Activated naive CD4-positive, alpha-beta T cell treated with anti-CD3 and anti-CD28 coated beads for 36 hours (primary cell): ENCODE measurements at regions of chr14 and their contacts with region 1.

Region 1: DNA sequence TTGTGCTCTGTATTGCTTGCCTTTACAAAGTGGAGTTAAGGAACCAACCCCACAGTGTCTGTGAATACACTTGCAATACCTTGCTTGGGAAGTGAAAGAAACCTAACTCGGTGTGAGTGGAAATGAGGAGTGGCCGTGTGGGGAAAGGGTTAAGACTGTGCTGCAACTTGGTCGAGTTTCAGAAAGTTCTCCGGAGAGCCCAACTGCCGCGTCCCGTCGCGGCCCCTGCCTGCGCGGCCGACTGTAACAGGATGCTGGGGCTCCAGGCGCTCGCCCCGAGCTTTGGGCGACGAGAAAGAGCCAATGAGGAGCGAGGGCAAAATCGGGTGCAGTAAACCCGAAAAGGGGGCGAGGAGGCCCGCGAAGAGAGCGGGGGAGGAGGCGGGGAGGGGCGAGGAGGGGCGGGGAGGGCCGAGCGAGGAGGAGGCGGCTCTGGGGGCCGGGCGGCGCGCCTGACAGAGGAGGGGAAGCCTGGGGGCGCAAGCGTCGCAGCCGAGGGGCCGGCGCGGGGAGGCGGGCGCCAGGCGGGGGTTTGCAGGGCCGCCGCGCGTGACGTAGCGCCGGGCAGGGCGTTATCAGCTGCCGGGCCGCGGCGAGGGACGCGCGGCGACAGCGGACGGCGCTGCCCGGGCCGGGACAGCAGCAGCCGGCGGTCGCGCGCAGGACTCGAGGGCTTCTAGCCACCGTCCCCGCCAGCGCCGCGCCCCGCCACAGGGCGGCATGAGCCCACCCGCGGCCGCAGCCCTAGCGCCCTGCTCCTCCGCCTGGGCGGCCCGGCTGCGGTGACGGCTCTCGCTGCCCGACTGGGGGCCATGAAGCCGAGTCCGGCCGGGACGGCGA is at the start of gene DACT1:
- DNase-seq: peak; percentile 68
- H3K4me3 Mint-ChIP-seq: peak within 1 kb of the TSS; percentile 91
- H3K27ac Mint-ChIP-seq: peak within 1 kb of the TSS; percentile 90
- H3K4me1 Mint-ChIP-seq: peaks cover 48% of the 10 kb centered on the region
- H3K27me3 Mint-ChIP-seq: peaks cover 5% of the 10 kb centered on the region
- total RNA-seq, gene DACT1: 4.0 to 5.2 TPM

Region 2: DNA sequence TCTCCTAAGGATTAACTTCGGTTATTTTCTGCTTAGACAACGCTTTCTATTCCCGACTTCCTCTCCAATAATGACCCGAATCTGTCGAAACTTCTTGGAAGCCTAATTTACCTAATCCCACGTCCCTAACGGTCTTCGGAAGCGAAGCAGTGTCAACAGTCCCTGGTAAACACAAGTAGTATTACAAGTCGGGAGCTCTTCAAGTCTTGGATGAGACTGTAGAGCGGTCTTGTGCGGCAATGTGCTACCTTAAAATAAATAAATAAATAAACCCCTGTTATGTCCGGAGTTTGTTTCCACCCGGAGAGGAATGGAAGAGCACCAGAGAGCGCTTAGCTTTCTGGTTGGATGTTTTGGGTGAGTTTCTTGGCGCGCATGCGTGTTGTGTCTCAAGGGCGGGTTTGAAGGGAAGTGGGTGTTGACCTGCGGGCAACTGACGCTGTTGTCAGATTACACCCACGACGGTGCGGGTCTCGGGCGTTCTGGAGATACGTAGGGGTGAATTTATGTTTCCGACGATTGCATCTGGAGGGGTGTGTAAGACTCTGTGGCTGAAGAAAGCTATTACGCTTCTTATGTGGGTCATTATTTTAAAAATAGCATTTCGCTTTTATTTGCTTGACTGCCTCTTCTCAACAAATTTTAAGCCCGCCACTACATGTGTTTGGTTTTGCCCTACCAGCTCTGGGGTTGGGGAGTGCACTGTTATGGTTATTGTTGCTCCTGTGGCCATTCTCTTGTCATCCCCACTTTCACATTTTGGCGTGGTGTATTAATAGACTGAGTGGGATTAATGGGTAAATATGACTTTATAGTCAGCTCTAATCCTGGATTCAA is 210.1 kb before region 1 on chr14 and contains the starts of genes KIAA0586 and TIMM9:
- CTCF ChIA-PET with region 1: interaction called, 3 read pairs
- intact Hi-C with region 1: loop called (anchors 1 kb)
- DNase-seq: peak; percentile 98
- H3K4me3 Mint-ChIP-seq: peak within 1 kb of the TSS; percentile 88
- H3K27ac Mint-ChIP-seq: peak within 1 kb of the TSS; percentile 99
- H3K4me1 Mint-ChIP-seq: peaks cover 48% of the 10 kb centered on the region
- H3K27me3 Mint-ChIP-seq: no peaks in the 10 kb centered on the region
- total RNA-seq, gene KIAA0586: 40.4 to 41.8 TPM
- total RNA-seq, gene TIMM9: 60.7 to 64.4 TPM

Region 3: GRCh38 chr14:58598028-58598803 is 39.4 kb before region 1 on chr14:
- CTCF ChIA-PET with region 1: interaction called, 3 read pairs
- intact Hi-C with region 1: loop called (anchors 1 kb)
- DNase-seq: peak; percentile 39
- H3K4me3 Mint-ChIP-seq: no peak overlapping the region
- H3K27ac Mint-ChIP-seq: no peak overlapping the region
- H3K4me1 Mint-ChIP-seq: peaks cover 43% of the 10 kb centered on the region
- H3K27me3 Mint-ChIP-seq: peaks cover 3% of the 10 kb centered on the region

Region 4: DNA sequence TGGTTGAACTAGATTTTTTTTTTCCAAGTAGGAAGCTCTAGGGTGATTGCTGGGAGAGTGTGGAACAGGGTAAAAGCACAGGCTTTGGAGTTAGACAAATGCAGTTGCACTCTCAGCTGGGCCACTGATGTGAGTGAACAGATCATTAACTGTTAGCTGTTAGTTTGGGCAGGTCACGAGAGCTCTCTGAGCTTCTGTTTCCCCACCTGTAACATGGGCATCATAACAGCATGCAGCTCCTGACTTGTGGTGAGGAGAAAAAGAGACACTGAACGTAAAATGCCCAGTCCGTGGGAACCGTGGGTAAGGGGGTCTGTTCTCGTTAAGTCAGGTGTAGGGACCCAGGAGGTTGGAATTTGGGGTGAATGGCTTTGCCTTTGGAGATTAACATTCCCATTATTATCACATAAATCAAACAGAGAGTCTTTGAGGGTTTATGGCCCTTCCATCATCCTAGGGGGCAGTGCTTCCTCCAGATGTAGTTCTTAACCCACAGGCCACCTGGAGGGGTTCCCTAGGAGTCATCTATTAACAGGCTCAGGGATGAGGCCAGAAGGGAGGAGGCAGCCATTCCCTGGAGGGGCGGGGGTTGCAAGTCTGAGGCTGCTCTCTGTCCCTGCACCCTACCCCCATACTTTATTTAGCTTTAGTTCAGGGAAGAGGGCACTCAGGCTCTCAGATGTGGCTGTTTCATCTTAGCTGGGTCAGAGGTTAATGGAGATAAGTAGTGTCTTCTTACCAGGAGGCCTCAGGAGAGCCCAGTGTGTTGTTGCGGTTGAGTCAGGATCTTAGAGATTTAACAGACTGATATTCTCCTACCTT is 135.4 kb after region 1 on chr14:
- CTCF ChIA-PET with region 1: no interaction called
- intact Hi-C with region 1: no loop called
- DNase-seq: no peak
- H3K4me3 Mint-ChIP-seq: no peak overlapping the region
- H3K27ac Mint-ChIP-seq: no peak overlapping the region
- H3K4me1 Mint-ChIP-seq: no peaks in the 10 kb centered on the region
- H3K27me3 Mint-ChIP-seq: no peaks in the 10 kb centered on the region

Region 5: GRCh38 chr14:58954901-58955861 is 317.6 kb after region 1 on chr14:
- CTCF ChIA-PET with region 1: no interaction called
- intact Hi-C with region 1: loop called (anchors 1 kb)
- DNase-seq: no peak
- H3K4me3 Mint-ChIP-seq: no peak overlapping the region
- H3K27ac Mint-ChIP-seq: no peak overlapping the region
- H3K4me1 Mint-ChIP-seq: peaks cover 8% of the 10 kb centered on the region
- H3K27me3 Mint-ChIP-seq: peaks cover 11% of the 10 kb centered on the region

Region 6: DNA sequence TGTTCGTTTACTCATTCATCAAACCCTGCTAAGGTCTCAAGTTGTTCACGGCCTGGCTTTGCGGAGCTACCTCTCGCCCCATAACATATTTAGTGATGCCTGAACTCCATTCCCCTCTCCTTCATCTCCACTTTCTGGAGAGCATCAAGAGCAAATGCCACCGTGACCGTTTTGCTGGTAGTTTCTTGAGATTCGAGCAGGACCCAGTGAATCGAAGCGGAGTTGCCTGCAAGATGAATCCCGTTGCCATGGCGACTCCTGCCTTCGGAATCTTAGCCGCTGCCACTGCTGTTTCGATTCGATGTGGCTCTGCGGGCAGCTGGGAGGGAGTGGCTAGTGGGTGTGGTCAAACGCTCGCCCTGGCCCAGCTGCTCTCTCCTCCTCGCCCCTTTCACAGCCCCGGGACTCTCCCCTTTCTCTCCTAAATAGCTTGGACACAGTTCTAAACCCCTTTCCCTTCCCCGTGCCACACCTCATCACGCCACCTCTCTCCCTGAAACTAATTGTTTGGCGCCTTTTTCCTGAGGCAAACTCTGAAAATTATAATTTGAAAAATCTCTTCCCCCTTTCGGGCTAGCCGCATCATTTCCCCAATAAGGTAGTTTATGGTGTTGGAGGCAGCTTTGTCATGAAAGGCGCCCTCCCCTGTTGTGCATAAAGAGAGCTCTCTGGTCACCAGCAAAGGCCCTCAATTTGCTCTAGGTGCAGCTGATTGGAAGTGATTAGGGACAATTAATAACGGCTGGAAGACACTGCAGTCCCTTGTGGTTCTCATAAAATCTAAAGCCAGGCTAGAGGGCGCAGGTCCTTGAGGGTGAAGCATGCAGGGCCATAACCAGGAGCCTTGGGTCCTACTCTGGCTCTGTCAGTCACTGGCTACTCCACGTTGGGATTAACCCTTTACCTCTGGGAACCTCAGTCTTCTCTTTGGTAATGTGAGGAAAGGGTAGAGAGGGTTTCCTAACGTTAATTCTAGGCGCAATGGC is 552.5 kb after region 1 on chr14:
- CTCF ChIA-PET with region 1: no interaction called
- intact Hi-C with region 1: loop called (anchors 1 kb)
- DNase-seq: peak; percentile 77
- H3K4me3 Mint-ChIP-seq: peak overlapping the region; percentile 91
- H3K27ac Mint-ChIP-seq: no peak overlapping the region
- H3K4me1 Mint-ChIP-seq: peaks cover 13% of the 10 kb centered on the region
- H3K27me3 Mint-ChIP-seq: no peaks in the 10 kb centered on the region